Endothelial cell of umbilical vein (primary cell): ENCODE measurements at regions of chr3 and their contacts with region 1.

Region 1: GRCh38 chr3:46629551-46630517 is 17.5 kb downstream of the FAM240A start:
- DNase-seq: peak; percentile 86
- H3K4me3 ChIP-seq: peak overlapping the region; percentile 15 to 47 (median 16)
- H3K27ac ChIP-seq: no peak overlapping the region
- H3K4me1 ChIP-seq: peaks cover 9% of the 10 kb centered on the region
- H3K27me3 ChIP-seq: peaks cover 4 to 6% of the 10 kb centered on the region in 2 experiments
- CTCF ChIP-seq: peak; percentile 99 to 100
- POLR2A ChIP-seq: peak; percentile 54

Region 2: DNA sequence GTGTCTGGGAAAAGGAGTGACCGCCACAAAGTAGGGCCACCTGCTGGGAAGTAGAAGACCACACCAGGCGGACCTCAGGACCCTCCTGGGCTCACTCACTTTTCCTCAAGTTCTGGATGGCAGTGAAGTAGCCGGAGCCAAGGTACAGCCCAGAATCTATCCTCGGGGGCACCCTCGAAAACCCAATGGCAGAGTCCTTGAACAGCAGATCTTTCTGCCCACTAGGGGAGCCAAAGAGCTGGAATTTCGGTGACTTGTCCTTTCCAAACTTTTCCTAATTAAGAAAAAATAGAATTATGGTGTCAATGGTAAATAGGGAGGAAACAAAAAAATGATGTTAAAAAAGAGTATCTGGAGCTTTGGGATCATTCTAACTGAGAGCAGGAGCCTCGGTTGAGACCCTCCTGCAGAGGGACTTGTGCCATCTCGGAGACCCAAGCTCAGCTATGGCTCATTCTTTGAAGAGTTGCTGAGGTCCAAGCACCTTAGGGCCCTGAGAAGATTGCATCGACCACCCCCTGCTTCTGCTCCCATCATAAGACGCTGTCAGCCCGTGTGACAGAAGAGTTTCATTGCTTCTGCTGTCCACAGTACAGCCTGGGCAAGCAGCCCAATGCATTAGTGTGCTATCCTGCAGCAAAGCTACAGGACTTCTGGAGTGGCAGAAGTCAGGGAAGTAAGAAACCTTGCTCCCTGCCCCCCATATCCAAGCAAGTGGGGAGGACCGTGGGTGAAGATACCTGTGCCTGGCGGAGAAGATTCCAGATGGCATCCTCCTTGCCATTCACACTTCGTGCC is 179.9 kb before region 1 on chr3:
- CTCF ChIA-PET with region 1: interaction called, 10 read pairs
- POLR2A ChIA-PET with region 1: no interaction called
- dilution Hi-C with region 1: no loop called
- intact Hi-C with region 1: no loop called
- DNase-seq: no peak
- H3K4me3 ChIP-seq: no peak overlapping the region
- H3K27ac ChIP-seq: no peak overlapping the region
- H3K4me1 ChIP-seq: no peaks in the 10 kb centered on the region
- H3K27me3 ChIP-seq: peaks cover 0 to 8% of the 10 kb centered on the region in 2 experiments
- CTCF ChIP-seq: peak; percentile 62 to 65
- POLR2A ChIP-seq: no peak

Region 3: GRCh38 chr3:46462111-46462510 is 167.7 kb before region 1 on chr3:
- CTCF ChIA-PET with region 1: interaction called, 26 read pairs
- POLR2A ChIA-PET with region 1: no interaction called
- dilution Hi-C with region 1: no loop called
- intact Hi-C with region 1: no loop called
- DNase-seq: no peak
- H3K4me3 ChIP-seq: no peak overlapping the region
- H3K27ac ChIP-seq: no peak overlapping the region
- H3K4me1 ChIP-seq: no peaks in the 10 kb centered on the region
- H3K27me3 ChIP-seq: no peaks in the 10 kb centered on the region
- CTCF ChIP-seq: no peak
- POLR2A ChIP-seq: no peak

Region 4: DNA sequence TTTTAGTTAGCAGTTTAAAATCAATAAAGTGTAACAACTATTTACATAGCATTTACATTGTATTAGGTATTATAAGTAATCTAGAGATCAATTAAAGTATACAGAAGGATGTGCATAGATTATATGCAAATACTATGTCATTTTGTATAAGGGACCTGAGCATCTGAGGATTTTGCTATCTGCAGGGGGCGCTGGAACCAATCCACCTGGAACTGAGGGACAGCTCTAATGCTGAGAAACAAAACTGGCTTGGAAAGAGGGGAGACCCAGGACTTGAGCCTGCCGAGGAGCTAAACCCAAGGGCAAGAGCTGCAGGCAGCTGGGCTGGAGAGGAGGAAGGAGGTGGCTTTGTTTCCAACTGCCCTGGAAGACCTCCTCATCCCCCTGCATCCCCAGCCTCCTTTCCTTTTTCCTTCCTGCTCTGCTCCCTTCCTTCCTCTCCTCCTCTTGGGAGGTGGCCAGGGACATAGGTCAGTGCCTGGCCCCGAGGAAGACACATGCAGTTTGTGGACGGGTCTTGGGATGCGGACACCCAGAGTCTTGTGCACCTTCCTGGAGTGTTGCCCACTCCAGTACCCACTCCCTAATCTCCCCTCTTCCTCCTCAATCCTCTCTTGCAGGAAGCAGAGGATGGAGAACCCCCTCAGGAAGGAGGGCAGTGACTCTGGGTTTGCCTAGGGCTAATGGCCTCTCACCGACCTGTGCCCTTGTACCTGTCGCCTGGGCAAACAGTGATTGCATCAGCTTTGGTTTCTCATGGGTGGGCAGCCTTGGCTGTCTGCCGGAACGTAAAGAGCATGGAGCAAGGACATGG is 132.9 kb before region 1 on chr3:
- CTCF ChIA-PET with region 1: interaction called, 43 read pairs
- POLR2A ChIA-PET with region 1: no interaction called
- dilution Hi-C with region 1: no loop called
- intact Hi-C with region 1: no loop called
- DNase-seq: peak; percentile 36
- H3K4me3 ChIP-seq: no peak overlapping the region
- H3K27ac ChIP-seq: no peak overlapping the region
- H3K4me1 ChIP-seq: peaks cover 12% of the 10 kb centered on the region
- H3K27me3 ChIP-seq: no peaks in the 10 kb centered on the region
- CTCF ChIP-seq: peak; percentile 25 to 28
- POLR2A ChIP-seq: no peak

Region 5: DNA sequence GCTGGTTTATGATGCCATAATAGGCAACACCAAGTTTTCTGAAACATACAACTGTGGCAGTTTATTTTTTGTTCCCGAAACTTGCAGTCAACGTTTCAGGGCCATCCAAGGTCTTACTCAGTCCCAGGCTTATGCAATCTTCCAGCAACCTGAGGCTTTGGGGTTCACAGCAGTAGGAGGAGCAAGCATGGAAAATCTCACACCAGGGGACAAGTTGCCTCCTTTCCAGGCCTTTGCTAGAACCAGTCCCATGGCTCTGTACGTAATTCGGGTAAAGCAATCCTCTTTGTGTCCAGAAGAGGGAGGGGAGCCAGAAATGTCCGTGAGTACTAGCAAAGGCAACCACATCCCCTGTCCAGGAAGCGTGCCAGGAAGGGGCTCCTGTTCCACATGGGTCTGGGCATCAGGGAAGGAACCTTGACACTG is 22.2 kb before region 1 on chr3:
- CTCF ChIA-PET with region 1: interaction called, 10 read pairs
- POLR2A ChIA-PET with region 1: no interaction called
- dilution Hi-C with region 1: no loop called
- intact Hi-C with region 1: no loop called
- DNase-seq: no peak
- H3K4me3 ChIP-seq: no peak overlapping the region
- H3K27ac ChIP-seq: no peak overlapping the region
- H3K4me1 ChIP-seq: no peaks in the 10 kb centered on the region
- H3K27me3 ChIP-seq: peaks cover 3 to 5% of the 10 kb centered on the region in 2 experiments
- CTCF ChIP-seq: no peak
- POLR2A ChIP-seq: no peak

Region 6: GRCh38 chr3:46670620-46671427 is 41.0 kb after region 1 on chr3:
- CTCF ChIA-PET with region 1: no interaction called
- POLR2A ChIA-PET with region 1: no interaction called
- dilution Hi-C with region 1: no loop called
- intact Hi-C with region 1: no loop called
- DNase-seq: no peak
- H3K4me3 ChIP-seq: no peak overlapping the region
- H3K27ac ChIP-seq: no peak overlapping the region
- H3K4me1 ChIP-seq: no peaks in the 10 kb centered on the region
- H3K27me3 ChIP-seq: no peaks in the 10 kb centered on the region
- CTCF ChIP-seq: no peak
- POLR2A ChIP-seq: no peak

Region 7: GRCh38 chr3:46695177-46695961 is 65.5 kb after region 1 on chr3:
- CTCF ChIA-PET with region 1: no interaction called
- POLR2A ChIA-PET with region 1: no interaction called
- dilution Hi-C with region 1: no loop called
- intact Hi-C with region 1: loop called (anchors 2 kb)
- DNase-seq: peak; percentile 86
- H3K4me3 ChIP-seq: no peak overlapping the region
- H3K27ac ChIP-seq: peak overlapping the region; percentile 64
- H3K4me1 ChIP-seq: peaks cover 22% of the 10 kb centered on the region
- H3K27me3 ChIP-seq: no peaks in the 10 kb centered on the region
- CTCF ChIP-seq: peak; percentile 26 to 27
- POLR2A ChIP-seq: peak; percentile 28